H1 (cell line): ENCODE measurements at regions of chr2 and their contacts with region 1.

Region 1: GRCh38 chr2:124027182-124027581 is 2.1 kb downstream of the CNTNAP5 start:
- DNase-seq: no peak
- H3K4me3 ChIP-seq: no peak overlapping the region
- H3K27ac ChIP-seq: no peak overlapping the region
- H3K4me1 ChIP-seq: peaks cover 0 to 7% (median 2%) of the 10 kb centered on the region in 4 experiments; a peak in 2 of 7 replicates
- H3K27me3 ChIP-seq: peaks cover 16 to 34% (median 29%) of the 10 kb centered on the region in 4 experiments
- CTCF ChIP-seq: peak in 2 of 3 experiments; percentile 67 to 71; a peak in 3 of 4 replicates
- EP300 ChIP-seq: no peak
- POLR2A ChIP-seq: no peak
- RAD21 ChIP-seq: peak; percentile 96 to 98

Region 2: DNA sequence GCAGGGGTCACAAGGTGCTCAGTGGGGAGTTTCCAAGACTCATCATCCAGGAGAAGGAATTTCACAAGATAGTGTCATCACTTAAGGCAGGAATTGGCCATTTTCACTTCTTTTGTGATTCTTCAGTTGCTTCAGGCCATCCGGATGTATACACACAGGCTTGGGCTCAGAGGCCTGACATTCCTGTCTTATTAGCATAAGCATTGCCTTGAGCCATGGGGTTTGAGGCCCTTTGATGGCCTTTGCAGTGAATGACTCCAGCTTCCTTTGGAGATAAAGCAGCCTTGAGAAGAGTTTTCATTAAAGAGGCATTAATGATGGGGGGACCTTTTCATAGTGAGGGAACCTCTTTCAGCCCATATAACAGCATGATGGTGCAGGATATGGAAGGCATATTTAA is 368.1 kb before region 1 on chr2:
- CTCF ChIA-PET with region 1: no interaction called
- POLR2A ChIA-PET with region 1: no interaction called
- DNase-seq: no peak
- H3K4me3 ChIP-seq: no peak overlapping the region
- H3K27ac ChIP-seq: no peak overlapping the region
- H3K4me1 ChIP-seq: peaks cover 0 to 5% (median under 1%) of the 10 kb centered on the region in 4 experiments; a peak in 1 of 7 replicates
- H3K27me3 ChIP-seq: no peaks in the 10 kb centered on the region
- CTCF ChIP-seq: no peak
- EP300 ChIP-seq: peak in 1 of 2 experiments; percentile 34; a peak in 1 of 3 replicates
- POLR2A ChIP-seq: no peak
- RAD21 ChIP-seq: no peak

Region 3: GRCh38 chr2:124039032-124039431 is 11.8 kb after region 1 on chr2:
- CTCF ChIA-PET with region 1: interaction called, 12 read pairs
- POLR2A ChIA-PET with region 1: no interaction called
- DNase-seq: no peak
- H3K4me3 ChIP-seq: no peak overlapping the region
- H3K27ac ChIP-seq: no peak overlapping the region
- H3K4me1 ChIP-seq: peaks cover 0 to 9% (median 3%) of the 10 kb centered on the region in 4 experiments; a peak in 5 of 7 replicates
- H3K27me3 ChIP-seq: no peaks in the 10 kb centered on the region
- CTCF ChIP-seq: no peak
- EP300 ChIP-seq: no peak
- POLR2A ChIP-seq: no peak
- RAD21 ChIP-seq: no peak

Region 4: GRCh38 chr2:124159166-124159565 is 132.0 kb after region 1 on chr2:
- CTCF ChIA-PET with region 1: interaction called, 16 read pairs
- POLR2A ChIA-PET with region 1: no interaction called
- DNase-seq: no peak
- H3K4me3 ChIP-seq: no peak overlapping the region
- H3K27ac ChIP-seq: no peak overlapping the region
- H3K4me1 ChIP-seq: peaks cover 0 to 3% (median 1%) of the 10 kb centered on the region in 4 experiments; a peak in 2 of 7 replicates
- H3K27me3 ChIP-seq: no peaks in the 10 kb centered on the region
- CTCF ChIP-seq: no peak
- EP300 ChIP-seq: no peak
- POLR2A ChIP-seq: no peak
- RAD21 ChIP-seq: no peak

Region 5: DNA sequence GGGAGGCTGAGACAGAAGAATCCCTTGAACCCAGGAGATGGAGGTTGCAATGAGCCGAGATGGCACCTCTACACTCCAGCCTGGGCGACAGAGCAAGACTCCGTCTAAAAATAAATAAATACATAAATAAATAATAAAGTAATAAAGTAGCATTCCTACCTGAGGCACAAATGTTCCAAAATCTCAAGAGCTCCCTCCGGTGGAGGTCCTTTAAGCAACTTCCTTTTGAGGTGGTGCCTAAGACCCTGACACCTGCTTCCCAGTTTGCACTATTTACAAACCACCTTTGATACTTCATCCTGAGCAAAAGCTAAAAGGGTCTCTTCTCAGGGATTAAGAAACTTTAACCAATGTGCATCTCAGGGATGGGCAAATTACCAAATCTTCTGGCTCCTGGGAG is 503.0 kb after region 1 on chr2:
- CTCF ChIA-PET with region 1: interaction called, 17 read pairs
- POLR2A ChIA-PET with region 1: no interaction called
- DNase-seq: no peak
- H3K4me3 ChIP-seq: no peak overlapping the region
- H3K27ac ChIP-seq: no peak overlapping the region
- H3K4me1 ChIP-seq: peaks cover 0 to 2% (median 0%) of the 10 kb centered on the region in 4 experiments; a peak in 1 of 7 replicates
- H3K27me3 ChIP-seq: no peaks in the 10 kb centered on the region
- CTCF ChIP-seq: peak in 2 of 3 experiments; percentile 9 to 14; a peak in 2 of 4 replicates
- EP300 ChIP-seq: no peak
- POLR2A ChIP-seq: no peak
- RAD21 ChIP-seq: peak; percentile 27 to 52; a peak in 3 of 4 replicates

Region 6: DNA sequence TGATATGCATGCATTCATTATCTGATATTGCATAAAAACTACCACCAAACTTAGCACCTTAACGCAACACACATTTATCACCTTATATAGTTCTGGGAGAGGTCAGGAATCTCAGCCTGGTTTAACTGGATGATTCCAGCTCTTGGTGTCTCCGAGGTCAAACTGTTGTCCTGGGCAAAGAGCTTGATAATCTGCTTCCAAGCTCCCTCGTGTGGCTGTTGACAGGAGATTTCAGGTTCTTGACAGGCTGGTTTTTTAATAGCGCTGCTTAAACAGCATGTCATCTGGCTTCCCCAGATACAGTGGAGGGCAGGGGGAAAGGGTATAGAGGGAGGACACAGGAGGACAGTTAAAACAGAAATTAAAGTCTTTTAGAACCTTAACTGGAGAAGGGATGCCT is 783.0 kb after region 1 on chr2:
- CTCF ChIA-PET with region 1: interaction called, 23 read pairs
- POLR2A ChIA-PET with region 1: no interaction called
- DNase-seq: peak; percentile 27 to 45
- H3K4me3 ChIP-seq: no peak overlapping the region
- H3K27ac ChIP-seq: no peak overlapping the region
- H3K4me1 ChIP-seq: no peaks in the 10 kb centered on the region
- H3K27me3 ChIP-seq: no peaks in the 10 kb centered on the region
- CTCF ChIP-seq: peak; percentile 12 to 64 (median 63)
- EP300 ChIP-seq: no peak
- POLR2A ChIP-seq: no peak
- RAD21 ChIP-seq: peak; percentile 84 to 85